ENCODE measurements at regions of chrX and their contacts with region 1.

Region 1: GRCh38 chrX:41491267-41492004 is 44.3 kb downstream of the NYX start:
- DNase-seq: peak; percentile 76
- ATAC-seq: peak; percentile 94
- H3K4me3 ChIP-seq: peak overlapping the region; percentile 60; the same call in 1 of the 2 replicates
- H3K27ac ChIP-seq: peak overlapping the region; percentile 76
- H3K4me1 ChIP-seq: peaks cover 4% of the 10 kb centered on the region; the same call in 1 of the 2 replicates
- H3K27me3 ChIP-seq: no peaks in the 10 kb centered on the region
- CTCF ChIP-seq: no peak

Region 2: GRCh38 chrX:41293269-41293668 is 198.2 kb before region 1 on chrX:
- CTCF ChIA-PET with region 1: no interaction called
- POLR2A ChIA-PET with region 1: no interaction called
- intact Hi-C with region 1: no loop called
- DNase-seq: peak; percentile 37
- ATAC-seq: peak; percentile 78
- H3K4me3 ChIP-seq: no peak overlapping the region
- H3K27ac ChIP-seq: no peak overlapping the region
- H3K4me1 ChIP-seq: no peaks in the 10 kb centered on the region
- H3K27me3 ChIP-seq: no peaks in the 10 kb centered on the region
- CTCF ChIP-seq: peak; percentile 59

Region 3: DNA sequence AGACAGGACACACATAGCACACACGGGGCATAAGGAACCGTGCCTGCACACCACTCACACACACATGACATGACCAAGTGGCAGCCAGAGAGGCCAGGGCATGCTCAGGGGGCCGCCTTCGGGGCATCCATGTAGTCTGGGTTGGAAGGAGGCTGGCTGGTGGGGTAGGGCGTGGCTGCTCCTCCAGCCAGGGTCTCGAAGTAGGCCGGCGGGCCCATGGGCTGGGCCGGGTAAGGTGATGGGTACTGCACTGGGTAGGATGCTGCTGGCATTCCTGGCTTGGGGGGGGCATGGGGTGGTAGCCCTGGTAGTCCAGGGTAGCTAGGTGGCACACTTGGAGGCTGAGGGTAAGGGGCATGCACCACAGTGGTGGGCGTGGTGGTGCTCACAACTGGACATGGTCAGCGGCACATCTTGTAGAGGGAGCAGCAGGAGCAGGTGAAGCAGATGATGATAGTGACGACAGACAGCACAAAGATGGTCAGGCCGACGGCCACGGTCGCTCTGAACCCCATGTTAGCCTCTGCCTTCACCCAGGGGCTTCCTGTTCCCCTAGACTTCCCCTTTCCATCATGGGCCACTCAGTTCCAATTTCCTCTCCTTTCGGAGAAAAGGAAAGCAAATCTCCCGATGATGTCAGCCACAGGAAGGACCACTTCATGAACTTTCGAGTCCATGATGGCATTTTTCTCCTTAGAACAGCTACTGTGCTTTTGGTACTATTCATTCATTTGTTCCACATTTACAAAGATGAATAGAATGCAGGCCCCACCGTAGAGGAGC is 168.4 kb before region 1 on chrX:
- CTCF ChIA-PET with region 1: no interaction called
- POLR2A ChIA-PET with region 1: no interaction called
- intact Hi-C with region 1: no loop called
- DNase-seq: no peak
- ATAC-seq: no peak
- H3K4me3 ChIP-seq: no peak overlapping the region
- H3K27ac ChIP-seq: no peak overlapping the region
- H3K4me1 ChIP-seq: no peaks in the 10 kb centered on the region
- H3K27me3 ChIP-seq: no peaks in the 10 kb centered on the region
- CTCF ChIP-seq: no peak

Region 4: DNA sequence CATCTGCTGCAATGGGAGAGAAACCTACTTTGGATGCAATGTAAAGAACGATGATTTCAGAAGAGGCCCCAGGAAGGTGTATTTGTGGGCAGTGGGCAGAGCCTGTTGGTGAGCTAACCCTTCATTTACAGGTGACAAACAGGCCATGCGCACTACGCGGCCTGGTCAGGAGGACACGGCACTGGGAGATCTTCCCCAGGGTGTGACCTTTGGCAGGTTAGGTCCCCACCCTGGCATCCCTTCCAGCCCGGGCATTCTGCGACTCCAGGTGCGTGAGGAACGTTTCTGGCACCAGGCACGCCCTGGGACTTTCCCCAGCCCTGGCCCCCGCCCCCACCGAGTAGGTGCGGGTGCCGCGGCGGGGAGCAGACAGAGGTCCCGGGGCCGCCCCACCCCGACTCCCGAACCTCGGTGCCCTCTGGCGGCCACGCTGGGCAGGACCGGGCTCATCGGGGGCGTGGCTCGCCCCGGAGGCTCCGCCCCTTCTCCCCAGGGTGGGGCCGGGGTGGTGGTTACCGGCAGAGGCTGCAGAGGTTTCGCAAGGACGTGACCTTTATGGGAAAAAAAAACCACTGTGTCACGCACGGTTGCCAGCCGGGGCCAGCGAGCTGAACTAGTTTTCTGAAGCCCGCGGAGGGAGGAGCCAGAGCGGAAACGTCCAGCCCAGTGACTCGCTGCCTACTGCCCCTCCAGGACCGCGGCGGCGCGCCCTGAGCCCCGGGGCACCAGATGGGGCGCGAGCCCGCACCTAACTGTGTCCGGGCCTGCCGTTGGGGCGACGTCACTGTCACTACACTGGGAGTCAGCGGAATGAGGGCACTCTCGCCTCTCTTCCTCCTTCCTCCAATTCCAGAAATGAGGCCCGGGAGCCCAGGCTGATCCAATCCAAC is 49.3 kb before region 1 on chrX:
- CTCF ChIA-PET with region 1: interaction called, 5 read pairs
- POLR2A ChIA-PET with region 1: no interaction called
- intact Hi-C with region 1: loop called (anchors 10 kb)
- DNase-seq: peak; percentile 84
- ATAC-seq: peak; percentile 95
- H3K4me3 ChIP-seq: peak overlapping the region; percentile 68
- H3K27ac ChIP-seq: no peak overlapping the region
- H3K4me1 ChIP-seq: peaks cover 16% of the 10 kb centered on the region; the same call in 1 of the 2 replicates
- H3K27me3 ChIP-seq: no peaks in the 10 kb centered on the region
- CTCF ChIP-seq: peak; percentile 66

Measured in PC-3 (cell line).